ENCODE measurements at regions of chr7 and their contacts with region 1.

Region 1: DNA sequence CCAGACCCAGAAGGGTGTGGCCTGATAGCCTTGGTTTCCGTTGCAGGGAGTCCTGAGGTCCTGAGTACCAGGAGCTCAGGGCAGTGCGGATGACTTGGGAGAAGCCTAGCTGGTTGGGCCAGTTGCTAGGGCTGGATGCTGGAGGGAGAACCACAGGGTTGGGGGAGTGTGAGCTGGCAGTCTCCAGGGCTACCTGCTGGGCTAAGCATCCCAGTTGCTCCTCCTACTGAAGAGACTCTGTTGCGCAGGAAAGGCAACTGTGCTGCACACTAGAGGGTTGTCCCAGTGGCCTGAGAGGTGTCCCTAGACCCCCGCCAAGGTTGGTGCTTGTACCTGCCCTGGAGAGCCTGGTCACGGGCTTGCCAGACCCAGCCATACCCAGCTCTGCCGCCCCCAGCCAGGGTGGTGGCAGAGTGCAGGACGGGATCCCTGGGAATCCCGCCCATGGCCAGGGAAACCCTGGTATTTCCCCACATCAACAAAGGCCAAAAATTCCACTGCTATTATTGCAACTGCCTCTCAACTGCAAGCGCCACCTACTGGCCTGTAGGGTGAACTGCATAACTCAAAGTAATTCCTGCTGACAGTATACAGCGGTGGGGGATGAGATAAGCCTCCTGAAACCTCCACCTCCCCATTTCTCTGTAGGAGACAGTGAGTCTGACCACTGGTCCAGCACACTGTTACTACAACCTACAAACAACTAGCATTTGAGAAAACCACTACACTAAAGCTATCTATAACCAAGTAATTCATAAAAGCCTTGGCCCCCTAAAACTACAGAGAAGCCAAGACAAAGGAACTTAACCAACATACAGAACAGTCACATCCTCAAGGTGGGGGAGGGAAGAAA is 67.6 kb upstream of the DDC start:
- DNase-seq: peak; percentile 74
- H3K4me3 Mint-ChIP-seq: no peak overlapping the region
- H3K27ac Mint-ChIP-seq: no peak overlapping the region
- H3K4me1 Mint-ChIP-seq: peaks cover 15% of the 10 kb centered on the region
- H3K27me3 Mint-ChIP-seq: no peaks in the 10 kb centered on the region
- CTCF ChIP-seq: peak; percentile 79

Region 2: GRCh38 chr7:50588937-50589336 is 43.9 kb before region 1 on chr7:
- CTCF ChIA-PET with region 1: interaction called, 10 read pairs
- POLR2A ChIA-PET with region 1: no interaction called
- intact Hi-C with region 1: no loop called
- DNase-seq: peak; percentile 8
- H3K4me3 Mint-ChIP-seq: no peak overlapping the region
- H3K27ac Mint-ChIP-seq: no peak overlapping the region
- H3K4me1 Mint-ChIP-seq: no peaks in the 10 kb centered on the region
- H3K27me3 Mint-ChIP-seq: no peaks in the 10 kb centered on the region
- CTCF ChIP-seq: no peak

Region 3: DNA sequence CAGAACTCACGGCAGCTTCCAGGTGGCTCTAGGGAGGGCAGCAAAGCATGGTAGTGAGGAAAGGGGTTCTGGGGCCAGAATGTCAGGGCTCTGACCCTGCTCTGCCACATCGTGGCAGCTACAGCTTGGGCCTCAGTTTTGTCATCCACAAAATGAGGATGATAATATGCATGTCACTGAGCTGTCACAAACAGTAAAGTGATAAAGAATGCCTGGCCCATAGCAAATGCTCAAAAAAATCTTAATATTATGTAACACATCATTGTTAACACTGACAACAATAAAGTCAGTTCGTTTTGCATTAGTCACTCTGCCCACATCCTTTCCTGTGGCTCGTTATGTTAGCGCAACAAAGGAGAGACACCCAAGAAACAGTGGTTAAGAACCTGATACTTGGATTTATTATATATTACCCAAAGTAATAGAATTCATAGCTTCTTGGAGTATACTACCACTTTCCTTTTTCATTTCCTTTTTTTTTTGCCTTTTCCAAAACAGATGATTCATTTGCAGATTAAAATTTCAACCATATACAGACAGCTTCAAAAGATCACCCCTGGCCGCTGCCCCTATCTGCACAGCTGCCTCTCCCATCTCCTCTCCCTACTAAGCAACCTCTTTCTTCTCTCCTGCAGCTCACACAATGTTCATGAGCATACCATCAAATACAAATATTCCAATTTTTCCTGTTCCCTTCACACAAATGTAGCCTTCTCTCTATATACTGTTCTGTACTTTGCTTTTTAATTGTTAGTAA is 22.1 kb before region 1 on chr7:
- CTCF ChIA-PET with region 1: interaction called, 48 read pairs
- POLR2A ChIA-PET with region 1: no interaction called
- intact Hi-C with region 1: no loop called
- DNase-seq: peak; percentile 72
- H3K4me3 Mint-ChIP-seq: no peak overlapping the region
- H3K27ac Mint-ChIP-seq: peak overlapping the region; percentile 21
- H3K4me1 Mint-ChIP-seq: peaks cover 14% of the 10 kb centered on the region
- H3K27me3 Mint-ChIP-seq: no peaks in the 10 kb centered on the region
- CTCF ChIP-seq: no peak

Region 4: DNA sequence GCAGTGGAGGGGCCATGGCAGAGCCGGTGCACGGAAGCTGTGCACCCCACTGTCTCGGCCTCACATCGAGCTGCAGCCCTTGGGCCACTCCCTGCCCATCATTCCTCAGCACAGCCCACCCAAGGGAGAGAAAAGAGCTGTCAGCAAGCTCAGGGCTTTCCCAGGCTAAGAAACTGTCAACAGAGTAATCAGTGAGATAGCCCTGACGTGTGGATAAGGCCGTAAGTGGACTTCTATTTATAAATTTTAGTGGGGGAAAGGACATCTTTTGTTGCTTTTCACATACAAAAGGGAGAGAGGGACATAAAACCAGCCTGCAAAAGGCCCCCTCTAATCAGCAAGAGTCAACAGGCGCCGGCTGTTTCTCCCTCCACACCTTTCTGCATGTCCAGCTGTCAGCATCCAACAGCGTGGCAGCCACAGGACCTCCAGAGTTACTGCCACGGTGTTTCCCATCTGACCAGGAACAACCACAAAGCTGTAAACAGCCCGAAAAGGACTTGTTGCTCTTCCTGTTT is 10.8 kb before region 1 on chr7:
- CTCF ChIA-PET with region 1: interaction called, 24 read pairs
- POLR2A ChIA-PET with region 1: interaction called, 3 read pairs
- intact Hi-C with region 1: no loop called
- DNase-seq: no peak
- H3K4me3 Mint-ChIP-seq: no peak overlapping the region
- H3K27ac Mint-ChIP-seq: no peak overlapping the region
- H3K4me1 Mint-ChIP-seq: no peaks in the 10 kb centered on the region
- H3K27me3 Mint-ChIP-seq: no peaks in the 10 kb centered on the region
- CTCF ChIP-seq: no peak

Region 5: DNA sequence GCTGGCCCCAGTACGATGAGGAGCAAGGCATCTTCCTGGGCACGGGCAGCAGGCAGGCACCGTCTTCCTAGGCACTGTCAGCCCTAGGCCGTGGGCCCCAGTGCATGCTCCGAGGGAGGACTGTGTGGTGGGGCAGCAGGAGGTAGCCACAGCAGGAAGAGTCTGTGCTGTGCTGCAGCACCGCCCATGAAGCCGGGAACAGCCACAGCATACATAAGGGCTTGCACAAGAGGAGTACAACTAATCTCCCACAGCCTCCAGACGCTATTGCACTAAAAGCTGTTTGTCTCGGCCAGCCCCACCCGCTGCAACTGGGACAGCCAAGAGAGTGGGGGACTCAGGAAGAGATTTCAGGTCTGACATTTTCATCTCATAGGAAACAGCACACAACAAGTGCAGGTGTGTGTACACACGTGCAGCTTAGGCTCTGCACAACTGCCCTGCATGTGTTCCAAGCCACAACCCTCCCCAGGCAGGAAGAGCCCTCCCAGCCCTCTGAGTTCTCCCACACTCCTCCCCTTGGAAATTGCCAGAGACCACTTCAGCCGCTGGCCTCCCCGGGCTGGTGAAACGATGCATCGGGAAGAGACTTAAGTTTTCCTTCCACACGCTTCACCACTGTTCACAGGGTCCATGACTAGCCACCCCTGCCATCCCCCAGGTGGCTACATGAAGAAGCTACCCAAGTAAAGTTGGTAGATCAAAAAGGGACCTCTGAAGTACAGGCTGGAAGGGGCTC is 20.5 kb after region 1 on chr7:
- CTCF ChIA-PET with region 1: interaction called, 12 read pairs
- POLR2A ChIA-PET with region 1: no interaction called
- intact Hi-C with region 1: no loop called
- DNase-seq: peak; percentile 71
- H3K4me3 Mint-ChIP-seq: no peak overlapping the region
- H3K27ac Mint-ChIP-seq: no peak overlapping the region
- H3K4me1 Mint-ChIP-seq: peaks cover 22% of the 10 kb centered on the region
- H3K27me3 Mint-ChIP-seq: no peaks in the 10 kb centered on the region
- CTCF ChIP-seq: no peak

Region 6: DNA sequence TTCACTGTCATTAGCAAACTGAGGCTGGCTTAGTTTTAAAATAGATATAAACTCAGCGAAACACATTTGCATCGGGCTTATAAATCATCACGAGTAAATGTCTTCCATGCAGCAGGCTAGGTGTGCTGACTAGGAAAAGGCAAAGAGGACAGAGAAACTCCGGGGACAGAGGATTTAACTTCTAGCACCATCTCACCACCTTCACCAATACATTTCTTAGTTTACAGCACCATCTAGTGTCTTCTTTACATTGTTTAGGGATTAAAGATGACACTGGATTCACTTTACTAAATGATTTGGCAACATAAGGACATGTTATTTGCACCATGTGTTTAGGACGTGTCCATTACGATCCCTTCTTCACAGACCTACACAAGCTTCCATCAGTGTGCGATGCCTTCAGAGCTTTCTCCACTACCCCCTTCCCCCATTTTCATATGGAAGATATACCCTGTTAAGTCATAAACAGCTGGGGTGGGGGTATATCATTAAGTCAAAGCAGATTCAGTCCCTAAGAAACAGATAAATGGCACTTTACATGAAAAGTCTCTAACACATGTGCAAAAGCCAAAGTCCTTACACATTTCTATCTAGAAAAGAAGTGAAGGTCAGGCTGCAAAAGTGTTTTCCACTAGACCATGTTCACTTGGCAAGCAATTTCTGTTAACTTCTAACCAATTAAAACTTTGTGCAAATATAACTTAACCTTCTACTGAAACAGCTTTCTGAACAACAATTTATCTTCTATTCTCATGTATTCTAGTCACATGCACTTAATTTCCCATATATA is 46.6 kb after region 1 on chr7:
- CTCF ChIA-PET with region 1: interaction called, 47 read pairs
- POLR2A ChIA-PET with region 1: no interaction called
- intact Hi-C with region 1: no loop called
- DNase-seq: peak; percentile 58
- H3K4me3 Mint-ChIP-seq: no peak overlapping the region
- H3K27ac Mint-ChIP-seq: no peak overlapping the region
- H3K4me1 Mint-ChIP-seq: peaks cover 6% of the 10 kb centered on the region
- H3K27me3 Mint-ChIP-seq: no peaks in the 10 kb centered on the region
- CTCF ChIP-seq: peak; percentile 40

Region 7: DNA sequence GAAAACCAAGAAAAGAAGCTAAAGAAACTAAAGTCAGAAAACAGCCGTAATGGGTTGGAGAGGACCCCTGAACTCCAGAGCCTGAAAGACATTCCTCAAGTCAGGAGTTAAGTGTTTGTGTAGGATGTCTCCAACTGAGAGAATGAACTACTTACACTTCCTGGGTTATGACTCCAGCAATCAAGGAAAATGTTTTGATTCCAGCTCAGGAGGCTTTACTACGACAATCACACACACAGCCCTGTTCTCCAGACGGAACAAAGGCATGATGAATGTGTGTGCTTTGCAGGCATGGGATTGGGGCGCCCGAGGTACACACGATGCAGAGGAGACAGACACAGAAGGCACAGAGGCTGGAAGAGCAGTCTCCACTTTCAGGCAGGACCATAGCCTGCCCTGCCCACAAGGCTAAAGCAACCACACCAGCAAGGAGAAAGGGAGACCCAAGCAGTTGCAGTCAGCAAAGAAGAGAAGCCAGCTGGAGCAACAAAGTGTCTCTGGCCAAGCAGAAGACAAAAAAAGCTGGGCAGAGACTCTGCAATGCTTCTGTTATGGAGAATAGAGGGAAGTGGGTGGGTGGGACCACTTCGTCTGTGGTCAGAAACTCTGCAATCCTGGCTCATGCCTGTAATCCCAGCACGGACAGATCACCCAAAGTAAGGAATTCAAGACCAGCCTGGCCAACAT is 60.8 kb after region 1 on chr7:
- CTCF ChIA-PET with region 1: no interaction called
- POLR2A ChIA-PET with region 1: no interaction called
- intact Hi-C with region 1: no loop called
- DNase-seq: no peak
- H3K4me3 Mint-ChIP-seq: no peak overlapping the region
- H3K27ac Mint-ChIP-seq: no peak overlapping the region
- H3K4me1 Mint-ChIP-seq: no peaks in the 10 kb centered on the region
- H3K27me3 Mint-ChIP-seq: no peaks in the 10 kb centered on the region
- CTCF ChIP-seq: no peak

Measured in MCF 10A (cell line).